ENCODE measurements at regions of chr13 and their contacts with region 1.

Region 1: DNA sequence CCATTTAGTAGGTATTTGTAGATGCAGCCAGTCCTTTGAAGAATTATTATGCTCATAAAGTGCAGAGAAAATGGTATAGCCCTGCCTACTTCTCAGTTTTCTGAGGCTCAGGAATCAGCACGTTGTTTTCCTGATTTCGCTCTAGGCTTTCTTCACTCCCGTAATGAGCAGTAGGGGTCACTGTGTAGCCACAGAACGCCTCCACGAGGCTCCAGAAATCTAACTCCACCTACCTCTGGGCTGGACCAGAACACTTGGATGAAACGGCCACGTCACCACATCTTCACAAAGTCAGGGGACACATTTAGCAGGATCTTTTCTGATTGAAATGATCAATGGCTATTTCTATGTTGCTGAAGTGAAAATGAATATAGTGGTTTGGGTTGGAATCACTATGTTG is 49.8 kb upstream of the GTF3A start:
- DNase-seq: peak; percentile 59
- H3K4me3 ChIP-seq: no peak overlapping the region
- H3K27ac ChIP-seq: no peak overlapping the region
- H3K27me3 ChIP-seq: peaks cover 12% of the 10 kb centered on the region
- CTCF ChIP-seq: peak; percentile 85

Region 2: GRCh38 chr13:27401210-27401609 is 26.6 kb after region 1 on chr13:
- CTCF ChIA-PET with region 1: interaction called, 10 read pairs
- POLR2A ChIA-PET with region 1: no interaction called
- DNase-seq: no peak
- H3K4me3 ChIP-seq: no peak overlapping the region
- H3K27ac ChIP-seq: no peak overlapping the region
- H3K27me3 ChIP-seq: peaks cover 2% of the 10 kb centered on the region
- CTCF ChIP-seq: no peak

Region 3: GRCh38 chr13:27424246-27425157 is 49.9 kb after region 1 on chr13 and contains the start of gene GTF3A:
- CTCF ChIA-PET with region 1: interaction called, 12 read pairs
- POLR2A ChIA-PET with region 1: no interaction called
- DNase-seq: peak; percentile 52
- H3K4me3 ChIP-seq: peak within 1 kb of the TSS; percentile 85
- H3K27ac ChIP-seq: peak within 1 kb of the TSS; percentile 21
- H3K27me3 ChIP-seq: no peaks in the 10 kb centered on the region
- CTCF ChIP-seq: no peak
- polyA plus RNA-seq, gene GTF3A: 89.0 and 104 TPM in 2 replicates

Region 4: GRCh38 chr13:27442797-27443196 is 68.1 kb after region 1 on chr13:
- CTCF ChIA-PET with region 1: interaction called, 11 read pairs
- POLR2A ChIA-PET with region 1: no interaction called
- DNase-seq: no peak
- H3K4me3 ChIP-seq: no peak overlapping the region
- H3K27ac ChIP-seq: no peak overlapping the region
- H3K27me3 ChIP-seq: no peaks in the 10 kb centered on the region
- CTCF ChIP-seq: no peak

Region 5: DNA sequence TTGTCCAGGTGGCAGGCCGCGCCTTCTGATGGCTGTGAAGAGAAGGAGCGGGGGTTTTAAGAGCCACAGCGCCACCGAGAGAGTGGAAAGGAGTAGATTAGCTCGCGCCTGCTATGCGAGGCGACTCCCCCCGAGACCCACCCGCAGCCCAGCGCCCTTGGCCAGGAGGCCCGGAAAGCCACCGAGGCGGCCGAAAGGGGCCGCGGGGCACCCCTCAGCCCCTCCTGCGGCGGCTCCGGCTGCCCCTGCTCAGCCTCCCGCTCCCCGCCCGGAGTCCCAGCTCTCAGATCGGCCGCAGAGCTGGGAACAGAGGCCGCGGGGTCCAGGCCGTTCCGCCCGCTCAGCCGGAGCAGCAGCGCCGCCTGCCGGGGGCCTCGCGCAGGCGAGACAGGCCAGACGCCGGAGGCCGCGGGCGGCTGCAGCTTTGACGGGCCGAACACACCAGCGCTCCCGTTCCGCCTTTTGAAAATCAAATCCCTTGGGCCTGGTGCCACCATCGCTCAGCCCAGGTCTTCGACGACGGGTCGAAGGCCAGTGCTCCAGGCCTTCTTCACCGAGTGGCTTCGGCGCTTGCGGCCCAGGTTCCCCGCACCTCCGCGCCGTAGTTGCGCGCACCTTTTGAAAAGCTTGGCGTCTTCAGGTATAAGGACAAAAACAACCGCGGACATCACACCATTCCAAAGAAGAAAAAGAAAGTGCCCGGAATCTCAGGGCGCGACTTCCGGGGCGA is 579.2 kb after region 1 on chr13:
- CTCF ChIA-PET with region 1: interaction called, 11 read pairs
- POLR2A ChIA-PET with region 1: no interaction called
- DNase-seq: peak; percentile 10
- H3K4me3 ChIP-seq: peak overlapping the region; percentile 53
- H3K27ac ChIP-seq: no peak overlapping the region
- H3K27me3 ChIP-seq: peaks cover 51% of the 10 kb centered on the region
- CTCF ChIP-seq: peak; percentile 73

Region 6: GRCh38 chr13:27965740-27966640 is 591.3 kb after region 1 on chr13:
- CTCF ChIA-PET with region 1: interaction called, 11 read pairs
- POLR2A ChIA-PET with region 1: no interaction called
- DNase-seq: no peak
- H3K4me3 ChIP-seq: no peak overlapping the region
- H3K27ac ChIP-seq: no peak overlapping the region
- H3K27me3 ChIP-seq: peaks cover 94% of the 10 kb centered on the region
- CTCF ChIP-seq: no peak

Region 7: GRCh38 chr13:27980280-27980998 is 605.8 kb after region 1 on chr13:
- CTCF ChIA-PET with region 1: interaction called, 39 read pairs
- POLR2A ChIA-PET with region 1: no interaction called
- DNase-seq: no peak
- H3K4me3 ChIP-seq: no peak overlapping the region
- H3K27ac ChIP-seq: no peak overlapping the region
- H3K27me3 ChIP-seq: peaks cover 69% of the 10 kb centered on the region
- CTCF ChIP-seq: no peak

Measured in AG04450 (cell line).